ENCODE measurements at regions of chr1 and their contacts with region 1.

Region 1: DNA sequence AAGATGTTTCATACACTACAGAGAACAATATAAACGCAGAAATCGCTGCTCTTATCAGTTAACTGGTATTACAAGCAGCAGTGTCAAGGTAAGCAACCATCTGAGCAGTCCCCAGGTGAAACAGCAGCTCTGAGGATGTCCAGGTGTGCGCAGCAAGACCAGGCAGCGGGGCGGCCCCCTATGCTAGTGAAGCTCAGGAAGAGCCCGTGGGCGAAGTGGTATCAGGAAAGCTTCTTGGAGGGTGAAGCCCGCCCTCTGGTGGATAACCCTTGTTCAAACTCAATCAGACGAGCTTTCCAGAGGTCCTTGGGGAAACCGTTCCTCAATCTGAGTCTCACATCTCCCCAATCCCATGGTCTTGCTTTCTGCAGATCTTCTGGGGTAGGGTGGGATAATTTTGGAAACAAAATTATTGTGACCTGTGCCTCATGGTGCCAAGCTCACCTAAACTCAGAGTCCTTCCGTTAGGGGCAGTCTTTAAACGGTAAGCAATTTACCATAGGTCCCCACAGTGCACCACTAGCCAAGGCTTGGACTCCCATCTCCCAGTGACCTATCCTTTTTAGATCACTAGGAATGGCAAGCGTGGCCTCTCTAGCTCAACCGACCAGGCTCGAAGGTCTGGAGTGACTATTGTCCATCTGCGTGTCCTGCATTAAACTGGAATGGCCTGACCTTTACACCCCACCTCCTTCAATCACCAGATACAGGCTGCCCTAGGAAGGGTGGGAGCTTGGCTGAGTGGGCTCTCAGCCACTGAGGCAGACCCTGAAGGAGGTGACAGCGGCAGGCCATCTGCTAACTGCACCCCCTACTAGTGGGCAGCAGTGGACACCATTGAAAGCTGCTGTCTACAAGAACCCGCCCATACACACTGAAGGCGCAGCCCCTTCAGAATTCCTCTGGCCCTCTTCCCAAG is 13.6 kb upstream of the FAM110D start:
- DNase-seq: peak; percentile 67 to 87 (median 81)
- H3K4me3 ChIP-seq: no peak overlapping the region
- H3K4me3 Mint-ChIP-seq: peak overlapping the region in 1 of 2 donors; percentile 39
- H3K27ac ChIP-seq: no peak overlapping the region
- H3K27ac Mint-ChIP-seq: no peak overlapping the region
- H3K4me1 ChIP-seq: peaks cover 13 to 20% of the 10 kb centered on the region in 2 donors
- H3K4me1 Mint-ChIP-seq: peaks cover 20% of the 10 kb centered on the region
- H3K27me3 ChIP-seq: no peaks in the 10 kb centered on the region
- H3K27me3 Mint-ChIP-seq: peaks cover 3 to 6% (median 4%) of the 10 kb centered on the region in 3 donors
- CTCF ChIP-seq: peak; percentile 89

Region 2: DNA sequence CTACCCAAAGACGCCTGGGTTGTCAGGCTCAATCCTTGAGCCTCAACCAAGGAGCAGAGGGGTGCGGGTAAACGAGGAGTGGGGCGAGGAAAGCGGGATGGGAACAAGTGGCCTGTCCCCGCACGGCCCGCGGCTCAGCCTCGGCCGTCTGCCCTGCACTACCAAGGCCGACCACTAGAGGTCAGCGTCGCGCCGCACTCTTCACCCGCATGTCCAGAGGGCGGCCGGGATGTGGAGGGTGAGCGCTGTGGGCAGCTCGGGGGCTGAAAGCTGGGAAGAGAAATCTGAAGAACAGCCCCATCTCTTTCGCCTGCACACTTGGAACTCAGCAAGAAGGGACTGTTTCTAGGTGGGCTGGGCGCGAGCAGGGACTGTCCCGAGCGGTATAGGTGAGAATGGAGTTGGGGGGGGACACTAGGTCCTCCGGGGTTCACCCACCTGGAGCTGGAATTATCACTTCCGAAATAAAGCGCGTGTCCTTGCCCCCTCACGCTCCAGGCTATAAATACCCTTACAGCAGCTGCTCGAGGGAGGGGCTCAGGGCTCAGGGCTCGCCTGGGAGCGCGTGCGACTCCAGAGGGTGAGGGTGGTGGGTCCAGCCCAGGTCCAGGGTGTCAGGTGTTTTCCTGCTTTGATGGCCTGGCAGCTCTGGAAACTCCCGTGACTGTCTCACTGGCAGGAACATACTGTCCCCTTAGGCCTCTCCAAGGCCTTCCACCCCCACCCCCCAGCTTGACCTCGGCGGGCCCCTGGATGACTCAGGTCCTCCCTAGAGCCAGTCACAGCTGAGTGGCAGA is 109.1 kb before region 1 on chr1:
- intact Hi-C with region 1: loop called (anchors 10 kb)
- DNase-seq: peak; percentile 66 to 75 (median 69)
- H3K4me3 ChIP-seq: peak overlapping the region; percentile 57 to 83 (median 80)
- H3K4me3 Mint-ChIP-seq: peak overlapping the region; percentile 95 to 96
- H3K27ac ChIP-seq: peak overlapping the region in 1 of 2 donors; percentile 36
- H3K27ac Mint-ChIP-seq: peak overlapping the region in 5 of 7 donors; percentile 54 to 91 (median 88)
- H3K4me1 ChIP-seq: peaks cover 11 to 21% of the 10 kb centered on the region in 2 donors
- H3K4me1 Mint-ChIP-seq: peaks cover 15% of the 10 kb centered on the region
- H3K27me3 ChIP-seq: peaks cover 0 to 24% of the 10 kb centered on the region in 2 donors
- H3K27me3 Mint-ChIP-seq: peaks cover 25 to 33% (median 26%) of the 10 kb centered on the region in 3 donors
- CTCF ChIP-seq: peak; percentile 98

Region 3: GRCh38 chr1:26102526-26102925 is 42.8 kb before region 1 on chr1:
- intact Hi-C with region 1: loop called (anchors 1 to 2 kb)
- DNase-seq: no peak
- H3K4me3 ChIP-seq: no peak overlapping the region
- H3K4me3 Mint-ChIP-seq: no peak overlapping the region
- H3K27ac ChIP-seq: no peak overlapping the region
- H3K27ac Mint-ChIP-seq: no peak overlapping the region
- H3K4me1 ChIP-seq: no peaks in the 10 kb centered on the region
- H3K4me1 Mint-ChIP-seq: peaks cover 5% of the 10 kb centered on the region
- H3K27me3 ChIP-seq: no peaks in the 10 kb centered on the region
- H3K27me3 Mint-ChIP-seq: peaks cover 9 to 15% (median 12%) of the 10 kb centered on the region in 3 donors
- CTCF ChIP-seq: no peak

Measured in CD14-positive monocyte (primary cell).